ENCODE measurements at regions of chr1 and their contacts with region 1.

Region 1: GRCh38 chr1:1273512-1274298 is at the start of gene UBE2J2:
- DNase-seq: peak; percentile 94 to 98
- ATAC-seq: peak; percentile 97 to 98 (median 98)
- H3K4me3 ChIP-seq: peak within 1 kb of the TSS; percentile 71
- H3K27ac ChIP-seq: peak within 1 kb of the TSS; percentile 88
- H3K4me1 ChIP-seq: peaks cover 45% of the 10 kb centered on the region
- H3K27me3 ChIP-seq: no peaks in the 10 kb centered on the region
- CTCF ChIP-seq: no peak
- total RNA-seq, gene UBE2J2: 36.8 to 48.1 (median 42.4) TPM

Region 2: GRCh38 chr1:1115786-1116700 is 157.7 kb before region 1 on chr1 and contains the start of gene C1orf159:
- intact Hi-C with region 1: loop called in 1 of 2 experiments (anchors 5 kb)
- DNase-seq: peak; percentile 99
- ATAC-seq: peak; percentile 99
- H3K4me3 ChIP-seq: peak within 1 kb of the TSS; percentile 90
- H3K27ac ChIP-seq: peak within 1 kb of the TSS; percentile 67
- H3K4me1 ChIP-seq: peaks cover 4% of the 10 kb centered on the region
- H3K27me3 ChIP-seq: peaks cover 0 to 9% (median 5%) of the 10 kb centered on the region in 3 donors
- CTCF ChIP-seq: no peak
- total RNA-seq, gene C1orf159: 1.5 to 3.5 (median 2.6) TPM

Region 3: GRCh38 chr1:1231400-1232223 is 42.1 kb before region 1 on chr1 and contains the start of gene SDF4:
- intact Hi-C with region 1: loop called (anchors 5 kb)
- DNase-seq: peak; percentile 97 to 98
- ATAC-seq: peak; percentile 95 to 97 (median 96)
- H3K4me3 ChIP-seq: peak within 1 kb of the TSS; percentile 91
- H3K27ac ChIP-seq: peak within 1 kb of the TSS; percentile 96
- H3K4me1 ChIP-seq: peaks cover 24% of the 10 kb centered on the region
- H3K27me3 ChIP-seq: no peaks in the 10 kb centered on the region
- CTCF ChIP-seq: no peak
- total RNA-seq, gene SDF4: 70.6 to 109 (median 82.5) TPM